PC-3 (cell line): ENCODE measurements at regions of chr15 and their contacts with region 1.

Region 1: GRCh38 chr15:52331490-52332240 is 36.1 kb upstream of the MYO5C start:
- DNase-seq: peak; percentile 92
- ATAC-seq: peak; percentile 85
- H3K4me3 ChIP-seq: no peak overlapping the region
- H3K27ac ChIP-seq: peak overlapping the region; percentile 87
- H3K4me1 ChIP-seq: peaks cover 49% of the 10 kb centered on the region
- H3K27me3 ChIP-seq: no peaks in the 10 kb centered on the region
- CTCF ChIP-seq: peak; percentile 74

Region 2: GRCh38 chr15:52256366-52256765 is 75.3 kb before region 1 on chr15:
- CTCF ChIA-PET with region 1: interaction called, 5 read pairs
- POLR2A ChIA-PET with region 1: no interaction called
- intact Hi-C with region 1: loop called (anchors 2 kb)
- DNase-seq: peak; percentile 80
- ATAC-seq: peak; percentile 10; the same call in 1 of the 2 replicates
- H3K4me3 ChIP-seq: no peak overlapping the region
- H3K27ac ChIP-seq: no peak overlapping the region
- H3K4me1 ChIP-seq: peaks cover 42% of the 10 kb centered on the region
- H3K27me3 ChIP-seq: no peaks in the 10 kb centered on the region
- CTCF ChIP-seq: peak; percentile 66

Region 3: GRCh38 chr15:52370010-52370409 is 38.3 kb after region 1 on chr15:
- CTCF ChIA-PET with region 1: interaction called, 3 read pairs
- POLR2A ChIA-PET with region 1: no interaction called
- intact Hi-C with region 1: loop called (anchors 5 kb)
- DNase-seq: peak; percentile 78
- ATAC-seq: peak; percentile 98
- H3K4me3 ChIP-seq: peak overlapping the region; percentile 52
- H3K27ac ChIP-seq: peak overlapping the region; percentile 81
- H3K4me1 ChIP-seq: peaks cover 24% of the 10 kb centered on the region
- H3K27me3 ChIP-seq: no peaks in the 10 kb centered on the region
- CTCF ChIP-seq: no peak

Region 4: GRCh38 chr15:52528991-52529926 is 197.6 kb after region 1 on chr15:
- CTCF ChIA-PET with region 1: no interaction called
- POLR2A ChIA-PET with region 1: no interaction called
- intact Hi-C with region 1: loop called (anchors 2 kb)
- DNase-seq: peak; percentile 63
- ATAC-seq: peak; percentile 80
- H3K4me3 ChIP-seq: peak overlapping the region; percentile 77
- H3K27ac ChIP-seq: peak overlapping the region; percentile 46; the same call in 1 of the 2 replicates
- H3K4me1 ChIP-seq: peaks cover 11% of the 10 kb centered on the region
- H3K27me3 ChIP-seq: no peaks in the 10 kb centered on the region
- CTCF ChIP-seq: no peak

Region 5: GRCh38 chr15:52651868-52652267 is 320.2 kb after region 1 on chr15:
- CTCF ChIA-PET with region 1: no interaction called
- POLR2A ChIA-PET with region 1: no interaction called
- intact Hi-C with region 1: loop called (anchors 1 kb)
- DNase-seq: peak; percentile 71
- ATAC-seq: peak; percentile 84
- H3K4me3 ChIP-seq: peak overlapping the region; percentile 62
- H3K27ac ChIP-seq: peak overlapping the region; percentile 95
- H3K4me1 ChIP-seq: peaks cover 54% of the 10 kb centered on the region
- H3K27me3 ChIP-seq: no peaks in the 10 kb centered on the region
- CTCF ChIP-seq: no peak

Region 6: DNA sequence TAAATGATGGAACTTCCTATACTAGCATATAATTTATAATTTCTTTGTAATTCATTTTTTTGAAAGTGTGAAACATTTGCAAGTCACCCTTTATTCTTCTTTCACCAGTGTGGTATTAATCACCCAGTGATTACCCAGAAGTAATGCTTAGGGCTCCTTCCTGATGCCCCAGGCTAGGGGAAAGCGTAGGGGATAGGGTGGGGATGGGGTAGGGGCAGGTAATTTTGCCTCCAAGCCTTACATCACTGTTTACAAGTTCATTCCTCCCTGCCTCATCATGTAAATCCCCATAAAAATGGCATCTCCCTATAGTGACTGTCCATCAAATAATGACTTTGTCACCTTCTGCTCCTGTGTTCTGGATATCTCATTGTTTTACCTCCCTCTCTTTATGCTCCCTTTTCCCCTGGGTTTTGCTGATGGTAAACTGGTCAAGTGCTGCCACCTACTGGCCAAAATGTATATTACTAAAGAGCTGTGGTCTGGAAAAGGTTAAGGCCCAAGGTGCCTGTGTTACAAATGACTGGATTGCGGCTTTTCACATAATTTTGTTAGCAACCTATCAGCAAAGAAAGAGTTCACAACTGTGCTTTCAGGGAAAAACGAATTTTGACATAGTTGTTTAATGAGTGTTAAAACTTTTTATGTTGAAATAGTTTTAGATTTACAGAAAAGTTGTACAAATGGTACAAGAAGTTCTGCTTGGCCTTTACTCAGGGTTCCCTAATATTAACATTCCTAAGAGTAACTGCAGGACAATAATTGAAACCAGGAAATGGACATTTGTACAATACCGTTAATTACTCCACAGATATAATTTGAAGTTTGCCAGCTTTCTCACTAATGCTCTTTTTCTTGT is 403.8 kb after region 1 on chr15:
- CTCF ChIA-PET with region 1: no interaction called
- POLR2A ChIA-PET with region 1: interaction called, 30 read pairs
- intact Hi-C with region 1: loop called (anchors 1 kb)
- DNase-seq: peak; percentile 90
- ATAC-seq: peak; percentile 91
- H3K4me3 ChIP-seq: no peak overlapping the region
- H3K27ac ChIP-seq: no peak overlapping the region
- H3K4me1 ChIP-seq: no peaks in the 10 kb centered on the region
- H3K27me3 ChIP-seq: no peaks in the 10 kb centered on the region
- CTCF ChIP-seq: peak; percentile 87